Activated CD4-positive, alpha-beta T cell treated with anti-CD3 and anti-CD28 coated beads for 36 hours (primary cell): ENCODE measurements at regions of chr19 and their contacts with region 1.

Region 1: GRCh38 chr19:46766569-46767317 is 20.5 kb upstream of the STRN4 start:
- DNase-seq: peak; percentile 78
- ATAC-seq: peak; percentile 92
- H3K4me3 Mint-ChIP-seq: no peak overlapping the region
- H3K27ac Mint-ChIP-seq: no peak overlapping the region
- H3K4me1 Mint-ChIP-seq: no peaks in the 10 kb centered on the region
- H3K27me3 Mint-ChIP-seq: no peaks in the 10 kb centered on the region

Region 2: GRCh38 chr19:45902651-45903625 is 863.8 kb before region 1 on chr19:
- CTCF ChIA-PET with region 1: no interaction called
- POLR2A ChIA-PET with region 1: no interaction called
- intact Hi-C with region 1: no loop called
- DNase-seq: peak; percentile 100
- ATAC-seq: peak; percentile 88
- H3K4me3 Mint-ChIP-seq: peak overlapping the region; percentile 88
- H3K27ac Mint-ChIP-seq: peak overlapping the region; percentile 75
- H3K4me1 Mint-ChIP-seq: peaks cover 16% of the 10 kb centered on the region
- H3K27me3 Mint-ChIP-seq: no peaks in the 10 kb centered on the region

Region 3: DNA sequence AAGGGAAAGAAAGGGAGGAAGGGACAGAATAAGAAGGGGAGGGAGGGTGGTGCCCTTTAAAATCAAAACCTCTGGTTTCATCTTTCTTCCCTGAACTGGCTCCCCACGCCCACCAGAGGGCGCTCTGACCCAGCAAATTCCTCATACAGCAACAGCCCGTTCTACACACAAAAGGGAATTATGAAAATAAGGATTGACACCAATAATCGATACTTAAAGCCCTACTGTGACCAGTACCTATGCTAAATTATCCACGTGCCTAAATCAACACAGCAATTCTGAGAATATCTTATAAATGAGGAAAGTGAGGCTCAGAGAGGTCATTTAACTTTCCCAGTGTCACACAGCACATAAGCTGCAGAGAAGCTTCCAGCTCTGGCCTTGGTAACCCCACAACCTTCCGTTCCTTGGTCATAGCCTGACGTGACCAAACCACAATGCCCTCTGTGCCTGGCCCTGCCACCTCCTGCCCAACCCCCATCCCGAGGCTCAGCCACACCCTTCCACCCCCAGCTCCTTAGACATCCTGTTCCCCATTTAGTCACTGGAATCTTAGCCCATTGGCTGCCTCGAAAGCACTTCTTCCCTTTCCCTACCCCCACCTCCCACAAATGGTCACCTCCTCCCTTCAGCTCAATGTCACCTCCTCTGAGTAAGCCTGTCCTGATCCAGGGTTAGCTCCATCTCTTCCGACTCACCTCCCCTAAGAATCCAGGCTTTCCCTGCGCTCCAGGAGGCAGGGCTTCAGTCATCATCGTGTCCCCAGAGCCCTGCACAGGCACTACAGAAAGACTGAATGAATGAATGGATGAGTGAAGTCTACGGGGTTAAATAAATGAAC is 236.9 kb before region 1 on chr19:
- CTCF ChIA-PET with region 1: interaction called, 4 read pairs
- POLR2A ChIA-PET with region 1: no interaction called
- intact Hi-C with region 1: loop called in 1 of 2 experiments (anchors 5 kb)
- DNase-seq: peak; percentile 86
- ATAC-seq: peak; percentile 75
- H3K4me3 Mint-ChIP-seq: no peak overlapping the region
- H3K27ac Mint-ChIP-seq: peak overlapping the region; percentile 74
- H3K4me1 Mint-ChIP-seq: peaks cover 24% of the 10 kb centered on the region
- H3K27me3 Mint-ChIP-seq: no peaks in the 10 kb centered on the region

Region 4: DNA sequence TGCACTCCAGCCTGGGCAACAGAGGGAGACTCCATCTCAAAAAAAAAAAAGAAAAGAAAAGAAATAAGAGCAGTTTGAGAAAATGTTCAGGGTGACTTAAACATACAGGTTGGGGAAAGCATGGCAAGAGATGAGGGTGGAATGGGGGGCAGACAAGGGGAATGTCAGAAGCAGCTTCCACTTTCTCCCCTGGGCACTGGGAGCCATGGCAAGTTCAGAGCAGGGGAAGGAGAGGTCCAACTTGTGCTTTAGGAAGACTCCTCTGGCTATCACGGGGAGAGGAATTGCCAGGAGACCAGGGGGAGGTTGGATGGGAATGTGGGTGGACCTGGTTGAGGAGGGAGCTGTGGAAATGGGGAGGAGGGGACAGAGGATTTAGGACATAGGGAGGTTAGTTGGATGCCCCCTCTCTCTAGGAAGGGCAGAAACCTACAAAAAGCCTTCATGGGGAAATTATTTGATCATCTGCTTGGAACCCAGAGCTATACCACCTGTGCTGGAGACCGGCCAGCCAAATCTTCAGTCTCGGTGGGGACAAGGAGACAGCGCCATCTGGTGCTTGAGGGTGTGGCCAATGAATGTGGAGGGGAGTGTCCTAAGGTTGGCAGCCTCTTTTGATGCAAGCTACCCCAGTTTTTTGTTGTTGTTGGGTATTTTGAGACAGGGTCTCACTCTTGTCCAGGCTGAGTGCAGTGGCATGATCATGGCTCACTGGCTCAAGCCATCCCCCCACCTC is 13.2 kb before region 1 on chr19:
- CTCF ChIA-PET with region 1: interaction called, 21 read pairs
- POLR2A ChIA-PET with region 1: no interaction called
- intact Hi-C with region 1: no loop called
- DNase-seq: peak; percentile 86
- ATAC-seq: peak; percentile 91
- H3K4me3 Mint-ChIP-seq: no peak overlapping the region
- H3K27ac Mint-ChIP-seq: no peak overlapping the region
- H3K4me1 Mint-ChIP-seq: peaks cover 6% of the 10 kb centered on the region
- H3K27me3 Mint-ChIP-seq: no peaks in the 10 kb centered on the region